ENCODE measurements at regions of chr1 and their contacts with region 1.

Region 1: GRCh38 chr1:150259758-150260669 is 2.4 kb downstream of the CA14 start:
- DNase-seq: no peak
- ATAC-seq: no peak
- H3K4me3 Mint-ChIP-seq: no peak overlapping the region
- H3K27ac Mint-ChIP-seq: no peak overlapping the region
- H3K4me1 Mint-ChIP-seq: peaks cover 11% of the 10 kb centered on the region
- H3K27me3 Mint-ChIP-seq: peaks cover 26% of the 10 kb centered on the region

Region 2: DNA sequence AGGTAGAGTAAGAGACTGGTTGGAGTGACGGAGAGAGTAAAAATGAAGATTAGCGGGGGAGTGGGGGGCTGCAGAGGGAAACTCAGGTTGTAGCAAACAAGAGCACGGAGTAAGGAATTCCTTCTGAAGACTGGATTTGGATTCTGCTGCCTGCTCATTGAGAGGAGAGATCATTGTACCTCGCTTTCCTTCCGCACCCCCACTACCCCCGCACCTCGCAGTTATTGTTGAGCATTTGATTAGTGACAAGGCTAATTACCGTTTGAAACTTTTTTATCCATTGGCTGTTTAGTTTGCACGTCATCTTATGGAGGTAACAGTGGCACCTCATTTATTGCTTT is 61.8 kb after region 1 on chr1:
- CTCF ChIA-PET with region 1: interaction called, 20 read pairs
- POLR2A ChIA-PET with region 1: interaction called, 4 read pairs
- intact Hi-C with region 1: loop called (anchors 2 to 5 kb)
- DNase-seq: no peak
- ATAC-seq: no peak
- H3K4me3 Mint-ChIP-seq: peak overlapping the region; percentile 93
- H3K27ac Mint-ChIP-seq: peak overlapping the region; percentile 100
- H3K4me1 Mint-ChIP-seq: peaks cover 27% of the 10 kb centered on the region
- H3K27me3 Mint-ChIP-seq: no peaks in the 10 kb centered on the region

Region 3: DNA sequence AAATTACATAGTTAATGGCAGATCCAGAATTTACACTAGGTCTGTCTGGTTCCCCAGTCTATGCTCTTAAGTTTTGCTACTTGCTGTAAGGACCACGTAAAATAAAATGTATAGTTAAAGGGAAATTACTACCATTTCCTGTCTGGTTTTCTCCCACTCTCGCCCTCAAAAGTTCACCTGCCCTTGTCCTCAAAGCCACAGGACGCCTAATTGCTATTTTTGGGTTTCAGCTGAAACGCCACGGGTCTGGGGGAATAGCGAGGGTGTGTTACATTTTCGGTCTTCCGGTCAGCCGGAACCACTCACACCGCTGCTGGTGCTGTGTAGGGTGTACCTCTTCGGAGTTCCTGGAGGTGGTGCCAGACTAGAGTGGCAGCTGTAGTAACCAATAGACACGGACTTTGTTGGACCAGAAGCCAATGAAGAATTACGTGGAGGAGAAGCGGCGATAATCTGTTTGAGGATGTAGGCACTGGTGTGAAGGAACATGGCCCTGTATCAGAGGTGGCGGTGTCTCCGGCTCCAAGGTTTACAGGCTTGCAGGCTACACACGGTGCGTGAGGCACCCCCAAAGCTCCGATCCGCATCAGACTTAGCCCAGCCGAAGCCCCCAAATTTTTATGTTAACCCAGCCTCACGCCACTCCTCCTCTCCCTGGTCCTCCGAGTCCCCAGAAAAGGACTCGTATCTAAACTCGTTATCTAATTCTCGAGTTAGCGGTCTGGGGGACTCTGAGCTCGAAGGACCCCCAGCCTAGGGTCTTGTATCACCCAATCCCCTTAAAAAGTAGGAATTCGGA is 227.1 kb after region 1 on chr1 and contains the start of gene TARS2:
- CTCF ChIA-PET with region 1: no interaction called
- POLR2A ChIA-PET with region 1: no interaction called
- intact Hi-C with region 1: loop called in 1 of 2 experiments (anchors 10 kb)
- DNase-seq: peak; percentile 96
- ATAC-seq: peak; percentile 100
- H3K4me3 Mint-ChIP-seq: peak within 1 kb of the TSS; percentile 96
- H3K27ac Mint-ChIP-seq: peak within 1 kb of the TSS; percentile 99
- H3K4me1 Mint-ChIP-seq: peaks cover 13% of the 10 kb centered on the region
- H3K27me3 Mint-ChIP-seq: no peaks in the 10 kb centered on the region
- total RNA-seq, gene TARS2: 43.8 to 58.6 TPM

Region 4: DNA sequence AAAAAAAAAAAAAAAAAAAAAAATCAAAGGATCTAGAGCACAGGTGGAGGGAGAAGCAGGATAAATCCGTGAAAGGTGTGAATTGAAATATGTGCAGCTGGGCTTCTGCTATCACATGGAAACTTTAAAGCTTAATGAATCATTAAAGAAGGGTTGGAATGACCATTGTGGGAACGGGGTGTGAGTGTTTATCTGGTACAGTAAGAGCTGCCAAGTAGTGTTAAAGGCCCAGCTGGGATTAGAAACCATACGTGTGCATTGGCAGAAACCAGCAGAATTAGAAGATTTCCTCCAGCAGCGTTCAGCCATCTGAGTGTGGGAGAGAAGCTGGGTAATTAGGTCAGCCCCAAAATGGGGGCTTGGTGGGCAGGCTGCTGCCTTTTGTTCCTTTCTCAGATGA is 269.0 kb after region 1 on chr1:
- CTCF ChIA-PET with region 1: interaction called, 7 read pairs
- POLR2A ChIA-PET with region 1: no interaction called
- intact Hi-C with region 1: loop called (anchors 1 to 10 kb)
- DNase-seq: no peak
- ATAC-seq: no peak
- H3K4me3 Mint-ChIP-seq: no peak overlapping the region
- H3K27ac Mint-ChIP-seq: no peak overlapping the region
- H3K4me1 Mint-ChIP-seq: no peaks in the 10 kb centered on the region
- H3K27me3 Mint-ChIP-seq: no peaks in the 10 kb centered on the region

Region 5: DNA sequence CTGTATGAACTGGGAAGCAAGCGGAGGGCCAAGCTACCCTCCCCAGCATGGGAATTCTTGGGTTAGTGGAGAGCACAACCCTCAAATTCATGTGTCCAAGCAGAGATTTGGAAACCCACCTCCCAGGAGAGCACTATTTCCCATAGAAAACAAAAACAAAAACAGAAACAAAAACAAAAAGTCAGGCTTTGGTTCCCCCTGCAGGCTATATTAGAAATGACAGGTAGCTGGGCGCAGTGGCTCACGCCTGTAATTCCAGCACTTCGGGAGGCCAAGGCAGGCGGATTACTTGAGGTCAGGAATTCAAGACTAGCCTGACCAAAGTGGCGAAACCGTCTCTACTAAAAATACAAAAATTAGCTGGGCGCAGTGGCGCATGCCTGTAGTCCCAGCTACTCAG is 735.9 kb after region 1 on chr1:
- CTCF ChIA-PET with region 1: no interaction called
- POLR2A ChIA-PET with region 1: no interaction called
- intact Hi-C with region 1: loop called in 1 of 2 experiments (anchors 5 kb)
- DNase-seq: peak; percentile 47
- ATAC-seq: peak; percentile 34
- H3K4me3 Mint-ChIP-seq: no peak overlapping the region
- H3K27ac Mint-ChIP-seq: no peak overlapping the region
- H3K4me1 Mint-ChIP-seq: peaks cover 18% of the 10 kb centered on the region
- H3K27me3 Mint-ChIP-seq: no peaks in the 10 kb centered on the region

Measured in activated CD4-positive, alpha-beta T cell treated with anti-CD3 and anti-CD28 coated beads for 36 hours (primary cell).